PC-9 (cell line): ENCODE measurements at regions of chr2 and their contacts with region 1.

Region 1: DNA sequence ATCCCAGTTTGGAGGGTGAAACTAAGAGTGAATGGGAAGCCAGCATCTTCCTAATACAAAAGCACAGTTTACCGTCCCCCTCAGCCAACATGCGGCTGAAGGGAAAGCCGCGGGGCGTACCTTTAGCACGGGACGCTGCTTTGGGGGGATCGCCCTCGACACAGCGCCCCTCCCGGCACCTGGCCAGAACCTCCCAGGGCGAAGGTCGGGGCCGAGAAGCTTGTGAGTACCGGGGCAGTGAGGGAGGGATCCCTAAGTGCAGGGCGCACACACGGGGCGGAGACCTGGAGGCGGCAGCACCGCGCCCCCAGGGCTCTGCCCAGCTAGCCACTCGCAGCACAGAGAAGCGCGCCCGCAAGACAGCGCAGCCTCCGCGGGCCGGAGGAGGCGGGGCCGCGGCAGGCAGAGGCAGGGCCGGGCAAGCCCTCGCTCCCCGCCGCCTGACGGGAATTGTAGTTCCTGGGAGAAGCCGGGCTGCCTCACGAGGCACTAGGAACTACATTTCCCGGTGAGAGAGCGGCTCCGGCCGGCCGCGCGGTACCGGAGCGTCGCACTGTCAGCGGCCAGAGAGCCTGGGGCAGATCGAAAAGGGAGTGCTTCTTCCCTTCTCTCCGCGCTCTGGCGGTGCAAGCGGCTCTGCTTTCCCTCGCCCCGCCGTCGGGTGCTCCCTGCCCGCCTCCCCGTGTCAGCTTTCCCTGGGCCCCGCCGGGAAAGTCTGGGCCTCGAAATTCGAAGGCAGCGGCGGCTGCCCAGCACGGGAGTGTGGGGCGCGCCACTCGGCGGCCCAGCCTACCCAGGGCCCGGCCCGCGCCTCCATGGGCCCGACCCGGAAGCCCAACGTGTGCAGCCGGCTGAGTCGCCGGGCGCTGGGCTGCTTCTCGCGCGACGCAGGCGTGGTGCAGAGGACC is at the starts of genes DCAF17 and METTL8:
- DNase-seq: peak; percentile 95 to 98
- H3K4me3 ChIP-seq: peak within 1 kb of the TSS; percentile 64
- H3K27ac ChIP-seq: peak within 1 kb of the TSS; percentile 93
- H3K4me1 ChIP-seq: peaks cover 25% of the 10 kb centered on the region
- H3K27me3 ChIP-seq: no peaks in the 10 kb centered on the region
- CTCF ChIP-seq: peak; percentile 50
- total RNA-seq, gene DCAF17: 22.0 and 22.1 TPM in 2 replicates
- total RNA-seq, gene METTL8: 21.8 and 24.3 TPM in 2 replicates

Region 2: GRCh38 chr2:171522052-171522787 is 88.2 kb after region 1 on chr2 and contains the start of gene CYBRD1:
- CTCF ChIA-PET with region 1: no interaction called
- POLR2A ChIA-PET with region 1: no interaction called
- intact Hi-C with region 1: loop called (anchors 1 kb)
- DNase-seq: peak; percentile 66 to 92
- H3K4me3 ChIP-seq: peak within 1 kb of the TSS; percentile 83
- H3K27ac ChIP-seq: peak within 1 kb of the TSS; percentile 81
- H3K4me1 ChIP-seq: peaks cover 21% of the 10 kb centered on the region
- H3K27me3 ChIP-seq: no peaks in the 10 kb centered on the region
- CTCF ChIP-seq: no peak
- total RNA-seq, gene CYBRD1: 125 and 132 TPM in 2 replicates